Naive thymus-derived CD4-positive, alpha-beta T cell (primary cell): ENCODE measurements at regions of chr1 and their contacts with region 1.

Region 1: DNA sequence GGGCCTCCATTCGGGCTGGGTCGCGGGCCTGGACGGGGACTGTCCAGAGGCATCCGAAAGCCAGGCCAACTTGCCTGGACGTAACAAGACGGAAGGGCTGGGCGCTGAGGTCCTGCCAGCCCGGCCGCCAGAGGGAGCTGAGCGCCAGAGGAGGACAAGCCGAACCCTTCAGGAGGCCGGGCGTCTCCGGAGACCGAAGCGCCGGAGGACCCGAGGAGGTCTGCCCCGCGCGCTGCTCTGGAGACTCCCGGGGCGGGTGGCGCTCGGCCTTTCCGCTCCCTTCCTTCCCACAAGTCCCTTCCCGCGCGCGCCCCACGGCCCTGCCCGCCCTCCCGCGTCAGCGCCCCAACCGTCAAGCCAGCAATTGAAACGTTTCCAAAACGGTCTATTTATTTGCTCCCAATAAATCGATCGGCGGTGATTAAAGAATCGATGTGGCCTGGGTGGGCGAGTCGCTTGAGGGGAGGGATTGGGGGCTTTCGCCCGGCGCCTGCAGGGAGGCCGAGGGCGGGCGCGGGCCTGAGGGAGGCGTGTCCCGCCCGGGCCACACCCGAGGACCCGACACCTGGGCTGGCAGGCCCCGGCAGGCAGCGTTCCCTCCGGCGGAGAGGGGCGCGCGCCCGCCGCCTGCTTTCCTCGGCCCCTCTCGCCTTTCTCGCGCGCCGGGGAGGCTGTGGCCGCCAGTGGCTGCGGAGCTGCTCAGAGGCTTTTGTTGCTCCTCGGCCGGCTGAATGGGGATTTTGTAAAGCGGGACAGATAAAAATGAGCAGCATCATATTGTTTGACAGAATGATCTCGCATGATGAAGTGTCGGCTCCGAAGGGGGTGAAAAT is 5.2 kb upstream of the FOXD3 start:
- DNase-seq: peak in 5 of 9 donors; percentile 14 to 74 (median 22)
- ATAC-seq: peak; percentile 73
- H3K4me3 ChIP-seq: peak overlapping the region; percentile 25
- H3K4me3 Mint-ChIP-seq: peak overlapping the region; percentile 12 to 83 (median 67)
- H3K27ac ChIP-seq: no peak overlapping the region
- H3K27ac Mint-ChIP-seq: peak overlapping the region in 3 of 9 donors; percentile 39 to 86 (median 79)
- H3K4me1 ChIP-seq: peaks cover 0 to 8% of the 10 kb centered on the region in 2 donors
- H3K4me1 Mint-ChIP-seq: peaks cover 7 to 49% (median 34%) of the 10 kb centered on the region in 7 donors
- H3K27me3 ChIP-seq: peaks cover 18 to 60% of the 10 kb centered on the region in 2 donors
- H3K27me3 Mint-ChIP-seq: peaks cover 75 to 79% (median 76%) of the 10 kb centered on the region in 5 donors

Region 2: GRCh38 chr1:63327417-63328139 is 10.4 kb after region 1 on chr1:
- CTCF ChIA-PET with region 1: no interaction called
- POLR2A ChIA-PET with region 1: interaction called, 3 read pairs
- intact Hi-C with region 1: loop called (anchors 1 kb)
- DNase-seq: peak in 5 of 9 donors; percentile 17 to 68 (median 25)
- ATAC-seq: peak; percentile 52
- H3K4me3 ChIP-seq: no peak overlapping the region
- H3K4me3 Mint-ChIP-seq: peak overlapping the region in 7 of 10 donors; percentile 11 to 53 (median 32)
- H3K27ac ChIP-seq: no peak overlapping the region
- H3K27ac Mint-ChIP-seq: peak overlapping the region in 7 of 9 donors; percentile 33 to 77 (median 50)
- H3K4me1 ChIP-seq: peaks cover 11 to 15% of the 10 kb centered on the region in 2 donors
- H3K4me1 Mint-ChIP-seq: peaks cover 9 to 48% (median 36%) of the 10 kb centered on the region in 7 donors
- H3K27me3 ChIP-seq: peaks cover 39 to 65% of the 10 kb centered on the region in 2 donors
- H3K27me3 Mint-ChIP-seq: peaks cover 68 to 79% (median 79%) of the 10 kb centered on the region in 5 donors